Activated CD4-positive, alpha-beta T cell treated with anti-CD3 and anti-CD28 coated beads for 36 hours (primary cell): ENCODE measurements at regions of chr2 and their contacts with region 1.

Region 1: GRCh38 chr2:26846328-26847306 is 1.3 kb upstream of the DPYSL5 start:
- DNase-seq: peak; percentile 80
- ATAC-seq: peak; percentile 75
- H3K4me3 Mint-ChIP-seq: peak overlapping the region; percentile 36
- H3K27ac Mint-ChIP-seq: no peak overlapping the region
- H3K4me1 Mint-ChIP-seq: peaks cover 11% of the 10 kb centered on the region
- H3K27me3 Mint-ChIP-seq: peaks cover 42% of the 10 kb centered on the region

Region 2: DNA sequence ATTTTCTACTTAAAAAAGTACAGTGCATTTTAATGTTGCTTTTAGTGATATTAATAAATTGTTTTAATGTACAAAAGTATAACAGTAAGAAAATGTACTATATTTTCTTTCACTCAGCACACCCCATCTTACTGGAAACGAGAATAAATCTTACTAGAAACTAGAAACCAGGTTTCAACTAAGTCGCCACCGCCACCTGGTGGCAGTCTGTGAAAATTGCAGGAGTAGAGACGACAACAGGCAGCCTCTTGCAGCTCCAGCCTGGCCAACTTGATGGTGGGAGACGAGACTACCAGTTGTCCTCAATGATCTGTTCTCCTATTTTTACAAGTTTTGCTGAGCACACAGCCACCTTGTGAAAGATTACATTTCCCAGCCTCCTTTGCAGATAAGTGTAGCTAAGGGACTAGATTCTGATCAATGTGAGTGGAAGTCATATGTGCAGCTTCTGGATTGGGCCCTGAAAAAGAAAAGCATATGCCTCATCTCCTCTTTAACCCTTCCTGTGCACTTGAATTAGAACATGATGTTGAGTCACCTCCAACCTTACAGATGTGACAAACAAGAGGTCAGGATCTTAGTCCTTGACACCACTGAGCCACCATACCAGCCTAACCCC is 377.4 kb before region 1 on chr2:
- CTCF ChIA-PET with region 1: no interaction called
- POLR2A ChIA-PET with region 1: no interaction called
- intact Hi-C with region 1: no loop called
- DNase-seq: peak; percentile 88
- ATAC-seq: peak; percentile 80
- H3K4me3 Mint-ChIP-seq: no peak overlapping the region
- H3K27ac Mint-ChIP-seq: no peak overlapping the region
- H3K4me1 Mint-ChIP-seq: no peaks in the 10 kb centered on the region
- H3K27me3 Mint-ChIP-seq: no peaks in the 10 kb centered on the region

Region 3: DNA sequence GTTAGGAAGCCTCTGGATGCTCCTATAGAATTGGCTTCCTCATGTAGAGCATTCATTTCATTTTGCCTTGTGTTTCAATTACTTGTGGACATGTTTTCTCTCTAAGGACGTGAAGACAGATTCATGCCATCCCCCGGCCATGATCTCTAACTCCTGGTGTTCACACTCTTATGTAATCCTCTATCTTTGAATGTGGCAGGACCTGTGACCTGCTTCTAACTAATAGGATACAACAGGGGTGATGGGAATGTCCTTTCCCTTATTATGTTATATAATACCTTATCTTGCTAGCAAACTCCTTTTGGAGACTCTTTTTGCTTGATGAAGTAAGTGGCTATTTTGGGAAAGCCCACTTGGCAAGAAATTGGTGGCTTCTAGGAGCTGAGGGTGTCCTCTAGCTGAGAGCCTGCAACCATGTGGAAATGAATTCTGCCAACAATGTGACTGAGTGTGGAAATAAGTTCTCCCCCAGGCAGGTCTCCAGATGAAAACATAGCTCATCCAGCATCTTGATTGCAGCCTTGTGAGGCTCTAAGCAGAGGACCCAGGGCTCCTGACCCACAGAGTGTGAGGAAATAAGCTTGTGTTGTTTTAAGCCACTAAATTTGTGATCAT is 15.1 kb after region 1 on chr2:
- CTCF ChIA-PET with region 1: interaction called, 17 read pairs
- POLR2A ChIA-PET with region 1: no interaction called
- intact Hi-C with region 1: no loop called
- DNase-seq: no peak
- ATAC-seq: no peak
- H3K4me3 Mint-ChIP-seq: no peak overlapping the region
- H3K27ac Mint-ChIP-seq: no peak overlapping the region
- H3K4me1 Mint-ChIP-seq: no peaks in the 10 kb centered on the region
- H3K27me3 Mint-ChIP-seq: peaks cover 15% of the 10 kb centered on the region

Region 4: DNA sequence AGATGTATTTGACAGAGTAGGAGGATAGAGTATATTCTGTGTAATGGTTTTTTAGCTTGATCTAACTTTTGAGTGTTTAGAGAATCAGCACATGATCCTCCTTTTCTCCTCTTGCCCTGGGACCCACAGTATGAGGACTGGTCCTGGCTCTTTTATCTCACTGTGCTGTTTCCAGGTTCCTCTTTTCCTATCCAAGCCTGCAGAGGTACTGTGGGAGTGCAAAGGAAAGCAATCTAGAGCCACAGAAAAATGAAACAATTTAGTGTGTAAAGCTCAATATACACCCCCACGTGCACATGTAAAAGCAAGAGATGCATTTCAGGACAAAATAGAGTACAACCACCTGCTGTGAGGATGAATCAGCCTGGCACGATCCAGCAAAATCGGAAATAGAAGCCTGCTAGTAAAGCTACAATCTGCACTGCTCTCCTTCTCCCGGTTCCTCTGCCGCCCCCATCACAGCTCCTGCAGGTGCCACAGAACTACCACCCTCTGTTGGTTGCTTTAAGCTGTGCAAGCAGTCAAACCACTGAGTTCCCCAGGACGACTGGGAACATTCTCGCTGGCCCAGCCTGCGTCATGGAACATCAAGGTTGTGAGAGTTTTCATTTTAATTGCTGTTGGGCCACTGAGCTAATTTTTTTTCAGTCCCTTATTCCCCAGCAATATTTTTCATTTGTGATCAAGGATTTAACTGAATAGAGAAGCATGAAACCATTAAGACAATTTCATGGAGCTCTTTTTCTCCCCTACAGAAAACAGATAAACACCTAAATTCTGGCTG is 76.0 kb after region 1 on chr2:
- CTCF ChIA-PET with region 1: interaction called, 54 read pairs
- POLR2A ChIA-PET with region 1: no interaction called
- intact Hi-C with region 1: loop called (anchors 1 kb)
- DNase-seq: peak; percentile 71
- ATAC-seq: peak; percentile 93
- H3K4me3 Mint-ChIP-seq: no peak overlapping the region
- H3K27ac Mint-ChIP-seq: no peak overlapping the region
- H3K4me1 Mint-ChIP-seq: peaks cover 10% of the 10 kb centered on the region
- H3K27me3 Mint-ChIP-seq: peaks cover 13% of the 10 kb centered on the region

Region 5: GRCh38 chr2:26942543-26943295 is 96.1 kb after region 1 on chr2:
- CTCF ChIA-PET with region 1: interaction called, 108 read pairs
- POLR2A ChIA-PET with region 1: no interaction called
- intact Hi-C with region 1: loop called (anchors 1 kb)
- DNase-seq: peak; percentile 84
- ATAC-seq: peak; percentile 64
- H3K4me3 Mint-ChIP-seq: no peak overlapping the region
- H3K27ac Mint-ChIP-seq: no peak overlapping the region
- H3K4me1 Mint-ChIP-seq: peaks cover 2% of the 10 kb centered on the region
- H3K27me3 Mint-ChIP-seq: peaks cover 4% of the 10 kb centered on the region

Region 6: GRCh38 chr2:27264753-27265535 is 418.3 kb after region 1 on chr2:
- CTCF ChIA-PET with region 1: no interaction called
- POLR2A ChIA-PET with region 1: no interaction called
- intact Hi-C with region 1: loop called in 1 of 2 experiments (anchors 5 kb)
- DNase-seq: peak; percentile 80
- ATAC-seq: peak; percentile 67
- H3K4me3 Mint-ChIP-seq: peak overlapping the region; percentile 53
- H3K27ac Mint-ChIP-seq: no peak overlapping the region
- H3K4me1 Mint-ChIP-seq: peaks cover 23% of the 10 kb centered on the region
- H3K27me3 Mint-ChIP-seq: peaks cover 41% of the 10 kb centered on the region